PC-9 (cell line): ENCODE measurements at regions of chr2 and their contacts with region 1.

Region 1: GRCh38 chr2:202634556-202635427 is at the start of gene FAM117B:
- DNase-seq: peak; percentile 87 to 93
- H3K4me3 ChIP-seq: peak within 1 kb of the TSS; percentile 86
- H3K27ac ChIP-seq: peak within 1 kb of the TSS; percentile 40
- H3K4me1 ChIP-seq: peaks cover 7% of the 10 kb centered on the region
- H3K27me3 ChIP-seq: no peaks in the 10 kb centered on the region
- CTCF ChIP-seq: no peak
- total RNA-seq, gene FAM117B: 8.2 and 8.8 TPM in 2 replicates

Region 2: GRCh38 chr2:202721621-202722020 is 86.8 kb after region 1 on chr2:
- CTCF ChIA-PET with region 1: no interaction called
- POLR2A ChIA-PET with region 1: no interaction called
- intact Hi-C with region 1: no loop called
- DNase-seq: no peak
- H3K4me3 ChIP-seq: no peak overlapping the region
- H3K27ac ChIP-seq: no peak overlapping the region
- H3K4me1 ChIP-seq: no peaks in the 10 kb centered on the region
- H3K27me3 ChIP-seq: no peaks in the 10 kb centered on the region
- CTCF ChIP-seq: no peak

Region 3: GRCh38 chr2:202870431-202871299 is 235.9 kb after region 1 on chr2:
- CTCF ChIA-PET with region 1: no interaction called
- POLR2A ChIA-PET with region 1: no interaction called
- intact Hi-C with region 1: loop called (anchors 5 kb)
- DNase-seq: peak; percentile 47 to 68
- H3K4me3 ChIP-seq: peak overlapping the region; percentile 72
- H3K27ac ChIP-seq: no peak overlapping the region
- H3K4me1 ChIP-seq: no peaks in the 10 kb centered on the region
- H3K27me3 ChIP-seq: no peaks in the 10 kb centered on the region
- CTCF ChIP-seq: peak; percentile 53